ENCODE measurements at regions of chr3 and their contacts with region 1.

Region 1: DNA sequence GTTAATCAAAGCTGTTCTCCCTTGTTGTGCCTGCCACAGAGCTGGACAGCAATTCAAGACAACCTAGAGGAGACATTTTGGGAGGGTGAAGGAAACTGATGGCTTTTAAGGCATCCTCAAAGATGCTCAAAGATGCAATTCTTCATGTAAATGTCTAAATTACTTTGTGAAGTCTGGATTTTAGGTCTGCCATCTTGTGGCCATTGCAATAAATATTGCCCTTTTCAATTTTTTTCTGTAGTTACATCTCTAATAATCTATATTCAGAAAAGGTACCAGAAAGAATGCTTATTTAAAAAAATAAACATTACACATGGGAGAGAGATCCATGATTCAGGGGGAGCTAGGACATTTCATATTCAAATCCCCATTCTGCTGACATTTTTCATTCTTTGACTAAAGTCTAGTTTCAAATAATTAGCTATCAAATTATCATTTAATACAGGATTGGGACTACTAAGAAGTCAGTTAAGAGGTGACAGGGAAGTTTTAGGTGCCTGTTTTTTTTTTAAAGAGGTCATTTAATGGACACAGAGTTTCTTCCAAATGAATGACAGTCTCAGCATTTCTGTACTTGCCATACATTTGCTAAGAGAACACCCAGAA is 259.8 kb upstream of the WNT5A start:
- DNase-seq: peak in 1 of 2 experiments; percentile 22
- H3K4me3 ChIP-seq: no peak overlapping the region
- H3K4me1 ChIP-seq: peaks cover 7% of the 10 kb centered on the region
- H3K27me3 ChIP-seq: no peaks in the 10 kb centered on the region

Region 2: GRCh38 chr3:54853573-54854404 is 893.1 kb before region 1 on chr3:
- in situ Hi-C with region 1: loop called (anchors 25 kb)
- DNase-seq: peak; percentile 64 to 88
- H3K4me3 ChIP-seq: no peak overlapping the region
- H3K4me1 ChIP-seq: no peaks in the 10 kb centered on the region; the same call in 1 of the 2 replicates
- H3K27me3 ChIP-seq: no peaks in the 10 kb centered on the region